Caco-2 (cell line): ENCODE measurements at regions of chr3 and their contacts with region 1.

Region 1: GRCh38 chr3:181700168-181701087 is 11.3 kb upstream of the SOX2 start:
- DNase-seq: peak; percentile 63 to 79
- H3K4me3 ChIP-seq: no peak overlapping the region
- H3K4me3 Mint-ChIP-seq: peak overlapping the region; percentile 73
- H3K27ac Mint-ChIP-seq: no peak overlapping the region
- H3K4me1 ChIP-seq: no peaks in the 10 kb centered on the region
- H3K4me1 Mint-ChIP-seq: peaks cover 10% of the 10 kb centered on the region
- H3K27me3 ChIP-seq: no peaks in the 10 kb centered on the region
- H3K27me3 Mint-ChIP-seq: peaks cover 18% of the 10 kb centered on the region
- CTCF ChIP-seq: peak; percentile 71 to 84

Region 2: DNA sequence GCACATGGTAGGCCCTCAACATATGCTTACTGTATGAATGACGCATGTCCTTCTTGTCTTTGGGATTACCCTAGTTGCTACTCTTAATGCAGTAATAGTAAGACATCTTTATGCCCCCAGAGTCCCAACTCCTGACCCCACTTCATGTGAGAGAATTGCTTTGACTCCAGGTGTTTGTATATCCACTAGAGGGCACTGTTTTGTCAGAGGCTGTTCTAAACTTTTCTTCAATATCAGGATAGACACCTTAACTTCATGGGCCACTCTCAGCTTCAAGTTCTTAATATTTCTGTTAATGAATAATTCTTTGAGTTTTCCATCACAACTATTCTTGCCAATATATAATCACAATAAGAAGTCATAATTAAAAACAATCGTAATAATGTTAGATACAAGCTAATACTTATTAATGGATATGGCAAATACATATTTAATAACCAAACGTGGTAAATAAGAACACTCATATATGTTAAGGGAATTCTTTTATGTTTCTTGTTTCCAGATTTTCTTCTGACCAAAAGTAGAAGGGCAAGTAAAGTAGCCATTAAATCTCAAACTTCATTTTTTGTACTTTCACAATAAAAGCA is 373.7 kb before region 1 on chr3:
- CTCF ChIA-PET with region 1: interaction called, 5 read pairs
- POLR2A ChIA-PET with region 1: no interaction called
- intact Hi-C with region 1: loop called (anchors 1 kb)
- DNase-seq: peak in 1 of 2 experiments; percentile 32
- H3K4me3 ChIP-seq: no peak overlapping the region
- H3K4me3 Mint-ChIP-seq: no peak overlapping the region
- H3K27ac Mint-ChIP-seq: no peak overlapping the region
- H3K4me1 ChIP-seq: no peaks in the 10 kb centered on the region
- H3K4me1 Mint-ChIP-seq: no peaks in the 10 kb centered on the region
- H3K27me3 ChIP-seq: no peaks in the 10 kb centered on the region
- H3K27me3 Mint-ChIP-seq: peaks cover 31% of the 10 kb centered on the region
- CTCF ChIP-seq: peak; percentile 29 to 71

Region 3: DNA sequence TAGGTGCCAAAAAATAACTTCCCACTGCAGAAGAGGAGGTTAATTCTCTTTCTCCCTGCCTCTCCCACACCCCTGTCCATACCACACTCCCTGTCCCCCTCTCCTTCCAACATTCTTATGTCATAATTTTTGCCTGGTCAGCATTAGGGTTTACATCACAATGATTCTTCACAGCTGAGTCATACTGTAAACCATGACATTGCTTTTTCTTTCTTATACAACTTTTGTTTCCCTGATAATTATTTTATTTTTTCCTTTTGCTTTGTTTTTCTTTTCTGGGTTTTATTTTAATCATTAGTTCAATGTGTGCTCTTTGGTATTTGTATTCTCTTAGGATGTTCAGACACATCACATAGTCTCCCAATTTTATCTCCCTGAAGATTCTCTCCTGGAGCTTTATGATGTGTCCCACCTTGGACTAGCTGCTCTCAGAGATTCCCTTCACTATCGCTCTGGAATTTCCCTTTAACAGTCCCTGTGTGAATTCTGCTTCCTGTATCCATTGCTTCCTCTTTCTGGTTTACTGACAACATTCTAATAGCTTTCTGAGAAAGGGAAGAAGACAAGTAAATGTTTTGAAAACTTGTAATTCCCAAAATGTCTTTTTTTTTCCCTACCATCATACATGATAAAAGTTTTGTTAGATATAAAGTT is 82.0 kb after region 1 on chr3:
- CTCF ChIA-PET with region 1: no interaction called
- POLR2A ChIA-PET with region 1: no interaction called
- intact Hi-C with region 1: no loop called
- DNase-seq: no peak
- H3K4me3 ChIP-seq: no peak overlapping the region
- H3K4me3 Mint-ChIP-seq: no peak overlapping the region
- H3K27ac Mint-ChIP-seq: no peak overlapping the region
- H3K4me1 ChIP-seq: peaks cover 9% of the 10 kb centered on the region; the same call in 1 of the 2 replicates
- H3K4me1 Mint-ChIP-seq: peaks cover 9% of the 10 kb centered on the region
- H3K27me3 ChIP-seq: no peaks in the 10 kb centered on the region
- H3K27me3 Mint-ChIP-seq: no peaks in the 10 kb centered on the region
- CTCF ChIP-seq: no peak